Ascending aorta (tissue), 2 donors: ENCODE measurements at regions of chr1 and their contacts with region 1.

Region 1: GRCh38 chr1:61851849-61852669 is 109.8 kb downstream of the PATJ start:
- DNase-seq: no peak
- H3K4me3 ChIP-seq: no peak overlapping the region
- H3K27ac ChIP-seq: peak overlapping the region; percentile 38 to 77
- H3K4me1 ChIP-seq: peaks cover 0 to 26% of the 10 kb centered on the region in 2 donors
- H3K27me3 ChIP-seq: no peaks in the 10 kb centered on the region
- CTCF ChIP-seq: peak; percentile 68 to 78 (median 72)

Region 2: GRCh38 chr1:59971464-59971911 is 1880.6 kb before region 1 on chr1:
- intact Hi-C with region 1: loop called (anchors 5 kb)
- DNase-seq: peak in 1 of 2 donors; percentile 81
- H3K4me3 ChIP-seq: peak overlapping the region in 1 of 2 donors; percentile 9
- H3K27ac ChIP-seq: no peak overlapping the region
- H3K4me1 ChIP-seq: peaks cover 0 to 3% of the 10 kb centered on the region in 2 donors
- H3K27me3 ChIP-seq: no peaks in the 10 kb centered on the region
- CTCF ChIP-seq: peak; percentile 86 to 96 (median 96)

Region 3: DNA sequence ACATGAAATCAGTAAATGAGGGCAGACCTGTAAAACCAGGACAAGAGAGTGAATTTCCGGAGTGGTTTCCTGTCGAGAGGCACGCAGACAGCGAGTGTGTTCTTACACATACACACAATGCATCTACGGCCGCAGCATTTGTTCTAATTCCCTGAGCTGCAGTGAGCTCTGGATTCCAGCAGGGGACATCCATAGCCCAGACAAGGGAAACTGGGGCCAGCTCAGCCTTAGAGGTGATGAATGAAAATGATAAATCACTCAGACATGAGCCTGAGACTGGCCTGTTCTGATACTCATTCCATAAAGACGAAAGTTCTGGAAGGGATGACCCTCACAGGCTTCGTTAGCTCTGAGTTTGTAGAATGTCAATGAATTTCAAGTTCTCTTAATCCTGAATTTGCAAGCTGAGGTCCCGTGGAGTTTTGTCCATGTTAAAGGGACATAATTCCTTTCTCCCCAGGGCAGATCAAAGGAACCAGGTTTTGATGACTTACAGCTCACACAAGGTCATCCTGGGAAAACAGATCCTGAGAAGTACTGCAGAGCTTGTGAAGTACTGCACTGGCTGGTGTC is 1570.6 kb before region 1 on chr1:
- intact Hi-C with region 1: loop called (anchors 10 kb)
- DNase-seq: peak in 1 of 2 donors; percentile 79
- H3K4me3 ChIP-seq: no peak overlapping the region
- H3K27ac ChIP-seq: no peak overlapping the region
- H3K4me1 ChIP-seq: peaks cover 0 to 10% of the 10 kb centered on the region in 2 donors
- H3K27me3 ChIP-seq: no peaks in the 10 kb centered on the region
- CTCF ChIP-seq: peak; percentile 80 to 97 (median 96)

Region 4: GRCh38 chr1:61049850-61050540 is 802.1 kb before region 1 on chr1:
- intact Hi-C with region 1: loop called (anchors 5 kb)
- DNase-seq: peak; percentile 66 to 97
- H3K4me3 ChIP-seq: peak overlapping the region; percentile 72 to 97
- H3K27ac ChIP-seq: peak overlapping the region; percentile 97 to 98
- H3K4me1 ChIP-seq: peaks cover 6 to 21% of the 10 kb centered on the region in 2 donors
- H3K27me3 ChIP-seq: no peaks in the 10 kb centered on the region
- CTCF ChIP-seq: peak; percentile 90 to 98 (median 97)

Region 5: DNA sequence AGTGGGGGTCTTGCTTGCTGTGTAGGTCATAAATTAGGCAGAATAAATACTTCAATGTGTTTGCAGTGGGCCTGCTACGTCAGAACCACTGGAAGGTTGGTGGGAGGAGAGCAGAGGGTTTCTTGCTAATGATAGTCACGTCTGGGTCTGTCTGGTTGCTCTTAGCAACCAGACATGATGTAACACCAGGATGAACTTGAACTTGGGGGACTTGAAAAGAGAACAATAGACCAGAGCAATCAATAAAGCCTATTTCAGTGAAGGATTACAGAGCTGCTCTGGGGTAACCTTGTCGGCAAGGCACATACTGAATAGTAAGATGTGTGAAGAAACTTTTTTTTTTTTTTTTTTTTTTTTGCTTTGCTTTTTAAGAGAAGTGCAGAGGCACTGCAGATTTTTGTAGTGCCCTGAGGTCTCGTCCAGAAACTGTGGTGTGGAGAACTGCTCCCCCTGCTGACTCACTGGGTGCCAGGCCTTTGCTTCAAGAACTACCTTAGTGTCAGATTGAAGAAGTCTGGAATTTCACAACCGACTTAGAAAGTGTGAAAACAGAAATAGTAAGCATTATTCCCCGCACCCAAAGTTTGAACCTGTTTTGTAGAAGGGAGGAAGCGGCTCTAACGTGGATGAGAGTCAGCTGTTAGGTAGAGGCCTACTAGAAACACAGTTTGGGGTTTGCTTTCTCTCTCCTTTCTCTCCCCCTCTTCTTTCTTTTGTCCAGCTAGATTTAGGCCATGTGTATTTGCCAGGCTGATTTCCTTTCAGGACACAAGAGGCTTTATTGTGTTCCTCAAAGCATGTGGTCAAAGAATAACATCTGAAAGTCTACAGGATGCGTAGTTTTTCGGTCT is 398.7 kb before region 1 on chr1:
- intact Hi-C with region 1: loop called (anchors 5 kb)
- DNase-seq: peak; percentile 76 to 97
- H3K4me3 ChIP-seq: peak overlapping the region in 1 of 2 donors; percentile 31
- H3K27ac ChIP-seq: peak overlapping the region; percentile 83 to 92
- H3K4me1 ChIP-seq: peaks cover 20 to 54% of the 10 kb centered on the region in 2 donors
- H3K27me3 ChIP-seq: no peaks in the 10 kb centered on the region
- CTCF ChIP-seq: peak; percentile 67 to 80 (median 68)

Region 6: DNA sequence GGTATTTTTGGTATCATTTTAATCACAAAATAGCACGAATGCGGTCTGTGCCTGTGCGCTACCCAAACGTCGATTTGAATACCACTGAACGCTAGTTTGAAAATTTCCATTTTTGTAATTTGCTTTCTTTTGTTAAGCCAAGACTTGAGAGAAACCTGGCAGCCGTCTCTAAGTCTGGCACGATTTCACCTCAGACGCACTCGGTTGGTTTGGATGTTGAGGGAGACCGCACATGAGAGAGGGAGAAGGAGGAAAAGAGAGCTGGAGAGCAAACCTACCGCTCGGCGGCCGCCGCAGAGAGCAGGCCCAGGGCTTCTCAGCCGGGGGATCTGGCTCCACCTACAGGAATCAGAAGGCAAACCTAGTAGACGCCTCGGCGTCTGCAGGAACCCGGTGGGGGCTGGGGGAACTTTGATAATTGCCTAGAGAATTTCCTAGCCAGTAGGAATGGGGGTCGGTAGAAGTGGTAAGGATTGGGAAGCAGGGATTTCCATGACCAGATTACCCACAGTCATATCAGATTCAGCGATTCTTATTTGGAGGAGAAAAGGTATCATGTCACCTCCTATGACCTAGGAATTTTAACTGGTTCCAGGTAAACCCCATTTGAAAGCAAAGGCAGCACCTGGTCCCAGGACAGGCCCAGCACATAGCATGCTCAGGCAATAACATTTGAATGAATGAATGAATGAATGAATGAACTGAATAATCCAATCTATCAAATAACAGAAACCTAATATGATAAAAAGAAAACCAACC is 210.3 kb before region 1 on chr1:
- intact Hi-C with region 1: loop called (anchors 2 kb)
- DNase-seq: peak; percentile 47 to 92
- H3K4me3 ChIP-seq: peak overlapping the region; percentile 14 to 62
- H3K27ac ChIP-seq: peak overlapping the region; percentile 91 to 94
- H3K4me1 ChIP-seq: peaks cover 29 to 44% of the 10 kb centered on the region in 2 donors
- H3K27me3 ChIP-seq: no peaks in the 10 kb centered on the region
- CTCF ChIP-seq: peak; percentile 73 to 92 (median 77)

Region 7: DNA sequence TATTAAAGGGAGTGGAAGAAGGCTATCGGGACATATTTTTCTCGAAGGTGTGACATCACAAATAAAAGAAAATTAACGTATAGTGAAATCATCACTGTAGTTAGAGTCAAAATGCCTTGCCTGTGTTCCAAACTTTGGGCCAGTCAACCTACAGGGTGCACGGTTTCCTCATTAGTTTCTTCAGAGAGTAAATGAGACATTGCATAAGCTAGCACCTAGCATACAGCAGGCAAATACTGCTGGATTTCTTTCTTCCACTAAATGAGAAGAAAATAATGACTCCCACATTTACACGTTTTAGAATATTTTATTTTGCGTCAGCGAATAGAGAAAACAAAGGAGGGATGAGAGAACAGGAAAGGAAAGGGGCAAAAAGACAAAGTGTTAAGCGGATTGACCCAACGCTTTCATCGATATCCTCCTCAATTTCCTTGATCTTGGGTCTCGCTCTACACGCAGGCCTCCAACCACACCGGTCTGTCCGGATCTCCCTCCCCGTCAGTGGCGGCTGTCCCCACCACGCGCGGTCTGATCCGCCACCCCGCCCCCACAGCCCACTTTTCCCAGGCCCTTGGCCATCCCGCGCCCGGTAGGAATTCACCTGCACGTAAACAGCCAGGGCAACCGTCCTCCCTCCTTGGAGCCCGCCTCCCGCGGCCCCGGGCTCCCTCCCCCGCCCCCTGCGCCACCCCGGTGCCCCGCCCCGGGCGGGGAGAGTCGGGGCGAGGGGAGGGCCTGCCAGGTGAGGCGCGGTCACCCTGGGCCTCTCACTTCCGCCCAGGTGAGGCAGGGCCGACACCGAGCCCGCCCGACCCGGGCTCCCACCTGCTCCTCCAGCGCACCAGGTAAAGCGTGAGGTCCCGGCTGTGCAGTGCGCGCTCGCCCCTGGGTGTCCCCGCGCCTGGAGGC is 110.1 kb before region 1 on chr1 and contains the start of gene PATJ:
- intact Hi-C with region 1: loop called (anchors 5 kb)
- DNase-seq: peak in 1 of 2 donors; percentile 70
- H3K4me3 ChIP-seq: peak within 1 kb of the TSS; percentile 79 to 94
- H3K27ac ChIP-seq: peak within 1 kb of the TSS; percentile 97 to 99
- H3K4me1 ChIP-seq: peaks cover 0 to 21% of the 10 kb centered on the region in 2 donors
- H3K27me3 ChIP-seq: no peaks in the 10 kb centered on the region
- CTCF ChIP-seq: no peak
- total RNA-seq, gene PATJ: 26.7 TPM

Region 8: GRCh38 chr1:62286786-62287224 is 434.7 kb after region 1 on chr1:
- intact Hi-C with region 1: no loop called
- DNase-seq: no peak
- H3K4me3 ChIP-seq: no peak overlapping the region
- H3K27ac ChIP-seq: no peak overlapping the region
- H3K4me1 ChIP-seq: no peaks in the 10 kb centered on the region
- H3K27me3 ChIP-seq: no peaks in the 10 kb centered on the region
- CTCF ChIP-seq: no peak